CD8-positive, alpha-beta T cell (primary cell): ENCODE measurements at regions of chr12 and their contacts with region 1.

Region 1: DNA sequence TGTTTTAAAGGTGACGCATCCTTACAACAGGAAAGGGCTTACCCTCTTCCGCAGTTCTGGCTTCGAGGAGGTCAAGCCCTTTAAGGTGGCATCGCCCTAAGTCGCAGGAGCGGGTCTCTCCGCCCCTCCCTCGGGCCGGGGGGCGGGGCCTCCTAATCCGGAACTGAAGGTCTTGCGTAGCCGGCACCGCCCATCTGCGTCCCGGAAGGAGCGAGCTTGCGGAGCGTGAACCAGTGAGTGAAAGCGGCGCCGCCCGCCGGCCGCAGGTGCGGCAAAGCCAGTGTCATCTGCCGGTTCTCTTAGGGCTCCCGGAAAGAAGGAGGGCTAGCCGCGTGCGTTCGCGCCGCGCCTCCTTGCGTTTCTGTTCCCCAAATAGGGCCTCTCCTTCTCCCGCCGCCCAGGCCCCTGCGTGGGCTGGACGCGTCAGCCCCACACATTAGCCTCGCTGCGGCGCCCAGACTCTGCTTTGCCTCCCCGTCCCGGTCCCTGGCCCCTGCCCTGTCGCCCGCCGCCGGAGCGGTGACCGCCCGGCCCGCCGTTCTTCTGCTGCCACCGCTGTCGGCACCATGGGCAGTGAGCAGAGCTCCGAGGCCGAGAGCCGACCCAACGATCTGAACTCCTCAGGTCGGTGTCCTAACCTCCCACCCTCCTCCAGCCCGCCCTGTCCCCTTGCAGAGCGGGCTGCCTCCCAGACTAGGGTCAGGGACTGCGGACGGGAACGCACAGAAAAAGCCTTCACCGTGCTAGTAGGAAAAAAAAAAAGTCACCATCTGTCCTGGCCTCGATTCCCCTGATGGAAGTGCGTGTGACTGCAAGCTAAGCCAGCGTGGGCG is at the start of gene BORCS5:
- DNase-seq: peak; percentile 97 to 99 (median 99)
- ATAC-seq: peak; percentile 91
- H3K4me3 ChIP-seq: peak within 1 kb of the TSS; percentile 69 to 83
- H3K4me3 Mint-ChIP-seq: peak within 1 kb of the TSS; percentile 90
- H3K27ac ChIP-seq: peak within 1 kb of the TSS; percentile 85 to 95
- H3K27ac Mint-ChIP-seq: peak within 1 kb of the TSS; percentile 96
- H3K4me1 ChIP-seq: peaks cover 31% of the 10 kb centered on the region
- H3K4me1 Mint-ChIP-seq: peaks cover 48% of the 10 kb centered on the region
- H3K27me3 ChIP-seq: no peaks in the 10 kb centered on the region
- H3K27me3 Mint-ChIP-seq: no peaks in the 10 kb centered on the region
- CTCF ChIP-seq: peak; percentile 10
- total RNA-seq, gene BORCS5: 33.8 to 38.8 TPM

Region 2: DNA sequence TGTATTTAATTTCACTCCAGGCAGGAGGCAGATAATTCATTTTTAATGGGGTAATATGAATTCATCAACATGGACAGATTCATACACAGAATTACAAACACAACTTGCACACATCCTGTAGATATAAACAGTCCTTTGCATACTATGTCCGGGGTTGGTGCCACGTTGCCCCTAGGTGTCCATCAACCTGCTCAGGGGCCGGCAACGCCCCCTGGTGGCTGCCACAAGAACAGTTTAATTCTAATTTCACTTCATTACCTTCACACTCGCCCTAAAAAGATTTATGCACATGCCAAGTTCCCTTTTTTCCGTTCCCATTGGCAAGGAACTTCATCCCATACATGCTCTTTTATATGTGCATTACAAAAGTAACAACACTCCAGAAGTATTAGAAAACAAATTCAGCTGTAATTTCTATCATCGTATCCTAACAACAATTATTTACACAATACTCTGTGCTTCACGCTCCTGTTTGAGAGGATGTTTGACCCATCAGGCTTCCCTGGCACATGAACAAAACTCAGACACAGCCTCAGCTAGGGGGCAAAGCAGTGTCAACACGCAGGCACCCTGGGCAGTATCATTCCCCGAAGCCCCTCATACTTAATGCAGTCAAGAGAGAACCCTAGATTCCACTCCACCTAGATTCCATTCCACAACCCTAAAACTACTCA is 22.6 kb before region 1 on chr12:
- CTCF ChIA-PET with region 1: interaction called, 13 read pairs
- POLR2A ChIA-PET with region 1: interaction called, 3 read pairs
- intact Hi-C with region 1: loop called in 1 of 2 experiments (anchors 1 kb)
- DNase-seq: peak; percentile 13 to 80 (median 61)
- ATAC-seq: peak; percentile 66
- H3K4me3 ChIP-seq: no peak overlapping the region
- H3K4me3 Mint-ChIP-seq: no peak overlapping the region
- H3K27ac ChIP-seq: no peak overlapping the region
- H3K27ac Mint-ChIP-seq: no peak overlapping the region
- H3K4me1 ChIP-seq: peaks cover 7% of the 10 kb centered on the region
- H3K4me1 Mint-ChIP-seq: peaks cover 22% of the 10 kb centered on the region
- H3K27me3 ChIP-seq: no peaks in the 10 kb centered on the region
- H3K27me3 Mint-ChIP-seq: peaks cover 4% of the 10 kb centered on the region
- CTCF ChIP-seq: peak; percentile 91

Region 3: GRCh38 chr12:12562585-12563261 is 205.6 kb after region 1 on chr12 and contains the start of gene DUSP16:
- CTCF ChIA-PET with region 1: interaction called, 3 read pairs
- POLR2A ChIA-PET with region 1: interaction called, 6 read pairs
- intact Hi-C with region 1: loop called (anchors 1 to 5 kb)
- DNase-seq: peak; percentile 50 to 95 (median 75)
- ATAC-seq: peak; percentile 65
- H3K4me3 ChIP-seq: peak within 1 kb of the TSS; percentile 77 to 80
- H3K4me3 Mint-ChIP-seq: peak within 1 kb of the TSS; percentile 95
- H3K27ac ChIP-seq: peak within 1 kb of the TSS; percentile 92 to 96
- H3K27ac Mint-ChIP-seq: peak within 1 kb of the TSS; percentile 99
- H3K4me1 ChIP-seq: peaks cover 16% of the 10 kb centered on the region
- H3K4me1 Mint-ChIP-seq: peaks cover 43% of the 10 kb centered on the region
- H3K27me3 ChIP-seq: no peaks in the 10 kb centered on the region
- H3K27me3 Mint-ChIP-seq: no peaks in the 10 kb centered on the region
- CTCF ChIP-seq: no peak
- total RNA-seq, gene DUSP16: 27.9 to 34.1 TPM

Region 4: DNA sequence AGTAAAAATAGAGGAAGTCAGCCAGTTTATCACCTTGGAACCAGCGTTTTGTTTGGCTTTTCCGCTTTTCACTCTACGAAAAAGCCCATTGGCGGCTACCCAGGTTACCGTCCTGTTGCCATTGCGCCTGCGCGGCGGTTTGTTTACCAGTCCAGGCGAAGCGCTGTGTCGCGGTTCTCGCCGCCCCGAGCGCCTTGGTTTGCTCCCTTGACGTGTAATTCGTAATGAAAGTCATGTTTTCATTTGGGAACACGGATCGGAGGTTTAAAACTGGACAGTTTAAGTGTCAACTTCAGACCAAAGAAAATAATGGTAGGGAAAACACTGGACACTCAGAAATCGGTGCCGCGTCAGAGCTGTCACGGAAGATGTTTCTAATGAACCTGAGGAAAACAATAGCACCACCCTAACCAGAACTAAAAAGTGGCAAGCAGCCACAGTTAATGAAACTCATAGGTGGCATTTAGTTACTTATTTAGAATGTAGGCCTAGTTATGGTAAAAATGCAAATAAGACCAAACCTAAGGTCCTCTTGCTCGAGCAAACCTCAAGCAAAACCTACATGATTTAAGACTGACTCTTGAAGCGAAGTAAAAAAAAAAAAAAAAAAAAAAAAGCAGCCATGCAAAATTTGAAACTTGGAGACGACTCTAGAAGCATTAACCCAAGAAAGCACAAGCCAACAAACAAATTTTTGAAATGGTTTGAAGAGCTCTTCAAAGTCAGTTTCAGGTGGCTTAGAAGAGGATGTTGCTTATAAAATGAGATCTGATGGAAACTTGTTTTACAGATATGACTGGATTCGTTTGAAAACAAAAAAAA is 339.7 kb after region 1 on chr12:
- CTCF ChIA-PET with region 1: interaction called, 3 read pairs
- POLR2A ChIA-PET with region 1: interaction called, 6 read pairs
- intact Hi-C with region 1: loop called in 1 of 2 experiments (anchors 1 kb)
- DNase-seq: peak; percentile 87 to 96 (median 94)
- ATAC-seq: peak; percentile 84
- H3K4me3 ChIP-seq: peak overlapping the region; percentile 42 to 88
- H3K4me3 Mint-ChIP-seq: peak overlapping the region; percentile 93
- H3K27ac ChIP-seq: peak overlapping the region; percentile 96 to 100
- H3K27ac Mint-ChIP-seq: peak overlapping the region; percentile 100
- H3K4me1 ChIP-seq: peaks cover 20% of the 10 kb centered on the region
- H3K4me1 Mint-ChIP-seq: peaks cover 29% of the 10 kb centered on the region
- H3K27me3 ChIP-seq: no peaks in the 10 kb centered on the region
- H3K27me3 Mint-ChIP-seq: no peaks in the 10 kb centered on the region
- CTCF ChIP-seq: no peak

Region 5: GRCh38 chr12:12736759-12737676 is 379.9 kb after region 1 on chr12:
- CTCF ChIA-PET with region 1: interaction called, 21 read pairs
- POLR2A ChIA-PET with region 1: interaction called, 13 read pairs
- intact Hi-C with region 1: no loop called
- DNase-seq: peak in 7 of 9 experiments; percentile 31 to 86 (median 62)
- ATAC-seq: peak; percentile 80
- H3K4me3 ChIP-seq: peak overlapping the region; percentile 47 to 51
- H3K4me3 Mint-ChIP-seq: peak overlapping the region; percentile 73
- H3K27ac ChIP-seq: peak overlapping the region; percentile 55 to 80
- H3K27ac Mint-ChIP-seq: peak overlapping the region; percentile 96
- H3K4me1 ChIP-seq: peaks cover 25% of the 10 kb centered on the region
- H3K4me1 Mint-ChIP-seq: peaks cover 35% of the 10 kb centered on the region
- H3K27me3 ChIP-seq: no peaks in the 10 kb centered on the region
- H3K27me3 Mint-ChIP-seq: no peaks in the 10 kb centered on the region
- CTCF ChIP-seq: peak; percentile 80

Region 6: DNA sequence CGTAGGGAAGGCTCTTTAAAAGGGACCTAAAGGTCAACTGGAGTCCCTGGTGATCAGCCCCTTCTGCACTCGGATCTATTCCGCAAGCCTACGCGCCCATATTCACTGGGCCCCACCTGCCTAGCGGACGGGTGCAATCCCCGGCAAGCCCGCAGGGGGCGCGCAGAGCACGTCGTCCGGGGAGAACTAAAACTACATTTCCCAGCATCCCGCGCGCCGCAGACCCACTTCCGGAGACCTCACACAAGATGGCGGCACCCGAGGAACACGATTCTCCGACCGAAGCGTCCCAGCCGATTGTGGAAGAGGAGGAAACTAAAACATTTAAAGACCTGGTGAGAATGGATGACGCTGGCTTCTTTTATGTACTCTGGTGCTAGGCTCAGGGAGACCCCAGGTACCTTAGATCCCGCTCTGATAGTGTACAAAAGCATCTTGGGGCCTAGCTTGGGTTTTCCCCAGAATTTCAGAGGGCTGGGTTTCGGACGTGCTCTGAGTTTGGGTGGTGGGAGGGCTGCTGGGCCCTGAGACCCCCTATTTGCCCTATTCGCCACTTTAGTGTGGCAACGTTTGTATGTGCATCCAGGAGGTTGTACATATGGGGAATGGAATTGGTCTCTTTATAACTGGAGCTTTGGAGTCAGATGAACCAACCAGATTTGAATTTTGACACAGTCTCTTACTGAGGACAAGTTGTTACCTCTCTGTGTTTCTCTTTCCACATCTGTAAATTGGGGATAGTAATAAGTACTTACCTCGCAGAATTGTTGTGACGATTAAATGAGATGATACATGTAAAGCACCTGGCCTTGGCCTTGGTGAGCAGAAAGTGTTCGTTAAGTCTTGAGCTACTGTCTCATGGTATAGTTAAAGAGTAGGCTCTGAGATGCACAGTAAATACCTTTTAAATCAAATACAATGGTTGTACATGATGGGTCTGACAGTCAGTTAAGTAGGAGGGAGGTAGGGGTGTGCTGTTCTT is 456.3 kb after region 1 on chr12 and contains the start of gene DDX47:
- CTCF ChIA-PET with region 1: no interaction called
- POLR2A ChIA-PET with region 1: no interaction called
- intact Hi-C with region 1: loop called (anchors 5 kb)
- DNase-seq: peak; percentile 94 to 99 (median 96)
- ATAC-seq: peak; percentile 88
- H3K4me3 ChIP-seq: peak within 1 kb of the TSS; percentile 88 to 98
- H3K4me3 Mint-ChIP-seq: peak within 1 kb of the TSS; percentile 95
- H3K27ac ChIP-seq: peak within 1 kb of the TSS; percentile 78 to 91
- H3K27ac Mint-ChIP-seq: peak within 1 kb of the TSS; percentile 96
- H3K4me1 ChIP-seq: peaks cover 34% of the 10 kb centered on the region
- H3K4me1 Mint-ChIP-seq: peaks cover 65% of the 10 kb centered on the region
- H3K27me3 ChIP-seq: no peaks in the 10 kb centered on the region
- H3K27me3 Mint-ChIP-seq: no peaks in the 10 kb centered on the region
- CTCF ChIP-seq: peak; percentile 93
- total RNA-seq, gene DDX47: 173 to 174 TPM

Region 7: DNA sequence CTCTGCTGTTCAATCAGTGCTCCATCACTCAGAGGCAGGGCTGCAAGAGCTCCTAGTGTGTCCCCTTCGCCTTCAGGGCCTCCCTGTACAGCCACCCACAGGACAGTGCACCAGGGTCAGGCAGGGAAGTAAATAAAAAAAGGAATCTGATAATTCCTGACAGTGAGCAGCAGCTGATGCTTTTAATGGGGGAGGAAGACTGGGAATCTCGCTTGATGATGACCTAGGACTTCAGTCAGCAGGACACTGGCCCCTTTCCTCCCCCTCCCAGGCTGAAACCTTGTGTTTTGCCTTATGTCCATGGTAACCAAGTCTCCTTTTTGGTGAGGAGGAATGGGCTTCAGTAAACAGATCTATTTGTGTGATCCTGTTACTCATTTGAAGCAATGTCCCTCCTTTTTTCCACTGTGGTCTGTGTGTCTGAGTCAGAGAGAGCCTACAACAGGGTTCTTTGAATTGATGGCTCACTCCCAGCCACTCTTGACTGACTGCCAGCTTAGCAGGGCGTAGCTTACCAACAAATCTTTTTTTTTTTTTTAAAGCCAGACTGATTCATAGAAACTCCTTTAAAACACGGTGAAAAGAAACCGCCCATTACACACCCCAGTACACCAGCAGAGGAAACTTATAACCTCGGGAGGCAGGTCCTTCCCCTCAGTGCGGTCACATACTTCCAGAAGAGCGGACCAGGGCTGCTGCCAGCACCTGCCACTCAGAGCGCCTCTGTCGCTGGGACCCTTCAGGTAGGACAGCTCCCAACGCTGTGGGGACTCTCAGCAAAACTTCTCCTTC is 839.2 kb after region 1 on chr12 and contains the start of gene EMP1:
- CTCF ChIA-PET with region 1: no interaction called
- POLR2A ChIA-PET with region 1: no interaction called
- intact Hi-C with region 1: loop called in 1 of 2 experiments (anchors 5 kb)
- DNase-seq: peak; percentile 10 to 85 (median 67)
- ATAC-seq: peak; percentile 90
- H3K4me3 ChIP-seq: peak within 1 kb of the TSS; percentile 23 to 44
- H3K4me3 Mint-ChIP-seq: peak within 1 kb of the TSS; percentile 76
- H3K27ac ChIP-seq: no peak within 1 kb of the TSS
- H3K27ac Mint-ChIP-seq: peak within 1 kb of the TSS; percentile 34
- H3K4me1 ChIP-seq: peaks cover 14% of the 10 kb centered on the region
- H3K4me1 Mint-ChIP-seq: peaks cover 18% of the 10 kb centered on the region
- H3K27me3 ChIP-seq: no peaks in the 10 kb centered on the region
- H3K27me3 Mint-ChIP-seq: no peaks in the 10 kb centered on the region
- CTCF ChIP-seq: no peak
- total RNA-seq, gene EMP1: 4.4 to 5.0 TPM